Activated T-helper 2 cell treated with anti-CD3 and anti-CD28 coated beads, Interferon-gamma antibody, Interleukin-2, Interleukin-4, amounts not matched to agents 10 μg/mL and 5 μg/mL and 100 μg/mL, durations not matched to agents 14 hours and 24 hours and 36 hours (primary cell): ENCODE measurements at regions of chr11 and their contacts with region 1.

Region 1: DNA sequence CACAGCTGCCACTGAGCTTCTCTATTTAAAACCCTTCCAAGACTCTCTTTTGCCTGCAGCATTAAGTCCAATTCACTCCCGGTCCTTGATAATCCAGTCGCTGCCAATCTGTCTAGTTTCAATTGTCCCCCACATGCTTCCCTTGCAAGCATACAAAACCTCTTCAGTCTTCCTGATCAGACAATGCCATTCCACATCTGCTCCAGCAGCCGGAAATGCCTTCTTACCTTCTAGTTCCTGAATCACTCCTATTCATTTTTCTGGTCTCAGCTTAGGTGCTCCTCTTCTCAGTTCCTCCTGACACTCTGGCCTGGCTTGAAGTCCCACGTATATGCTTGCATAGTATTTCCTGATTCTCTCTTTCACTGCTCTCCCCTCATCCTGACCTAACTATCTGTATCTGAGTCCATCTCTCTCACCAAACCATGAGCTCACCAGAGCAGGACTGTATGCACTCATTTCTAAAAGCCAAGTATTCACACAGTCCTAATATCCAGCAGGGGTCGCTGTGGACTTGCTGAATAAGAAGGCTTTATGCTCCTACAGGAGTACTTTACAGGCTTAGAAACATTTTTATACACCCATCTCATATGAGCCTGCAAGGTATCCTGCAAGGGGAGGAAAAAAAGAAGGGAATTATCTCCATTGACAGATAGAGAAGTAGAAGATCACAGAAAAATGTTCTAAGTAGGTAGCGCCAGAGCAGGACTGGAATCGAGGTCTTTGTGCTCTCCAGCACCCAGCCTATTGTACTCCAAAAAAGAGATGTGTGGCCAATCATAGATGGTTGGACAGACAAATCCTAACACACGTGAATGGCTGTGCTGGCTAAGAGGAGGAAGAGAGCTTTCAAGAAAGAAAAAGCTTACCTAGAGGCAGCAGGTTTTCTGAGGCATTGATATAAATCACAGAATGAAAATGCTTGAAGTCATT is 19.2 kb downstream of the XRRA1 start:
- DNase-seq: peak; percentile 45
- H3K4me3 Mint-ChIP-seq: no peak overlapping the region
- H3K27ac Mint-ChIP-seq: no peak overlapping the region
- H3K4me1 Mint-ChIP-seq: peaks cover 39% of the 10 kb centered on the region
- H3K27me3 Mint-ChIP-seq: no peaks in the 10 kb centered on the region

Region 2: DNA sequence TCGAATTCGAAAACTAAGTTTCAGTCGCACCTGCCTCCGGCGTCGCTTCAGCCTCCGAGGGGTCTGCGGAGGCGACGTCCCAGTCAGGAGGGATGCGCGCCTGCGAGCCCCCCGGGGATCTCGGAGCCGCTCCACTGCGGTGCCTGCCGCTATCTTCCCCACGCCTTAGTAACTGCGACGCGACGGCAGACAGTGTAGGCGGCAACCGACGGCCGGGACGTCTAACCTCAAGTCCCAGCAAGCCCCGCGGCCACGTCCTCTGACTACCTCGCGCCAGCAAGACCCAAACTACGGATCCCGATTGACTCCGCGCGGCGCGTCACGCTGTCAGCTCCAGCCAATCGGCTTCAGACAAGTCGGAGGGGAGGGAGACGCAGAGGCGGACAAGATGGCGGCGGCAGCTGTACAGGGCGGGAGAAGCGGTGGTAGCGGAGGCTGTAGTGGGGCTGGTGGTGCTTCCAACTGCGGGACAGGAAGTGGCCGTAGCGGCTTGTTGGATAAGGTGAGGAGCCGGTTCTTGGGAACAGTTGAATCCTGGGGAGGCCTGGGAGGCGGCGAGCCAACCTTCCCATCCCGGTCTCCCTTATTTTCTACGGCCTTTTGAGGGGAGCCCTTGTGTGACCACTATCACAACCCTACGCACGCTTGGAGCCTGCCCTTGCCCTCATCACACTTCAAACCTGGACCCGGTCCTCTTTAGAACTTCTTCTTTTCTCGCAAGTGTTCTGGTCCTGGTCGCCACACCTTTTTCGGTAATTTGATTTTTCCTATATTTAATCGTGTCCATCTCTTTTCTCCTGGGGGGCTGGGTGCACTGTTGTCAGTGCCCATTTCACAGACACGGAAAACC is 19.4 kb after region 1 on chr11 and contains the starts of genes SPCS2 and XRRA1:
- intact Hi-C with region 1: loop called (anchors 2 kb)
- DNase-seq: peak; percentile 98
- H3K4me3 Mint-ChIP-seq: peak within 1 kb of the TSS; percentile 95
- H3K27ac Mint-ChIP-seq: peak within 1 kb of the TSS; percentile 94
- H3K4me1 Mint-ChIP-seq: peaks cover 38% of the 10 kb centered on the region
- H3K27me3 Mint-ChIP-seq: no peaks in the 10 kb centered on the region
- total RNA-seq, gene SPCS2: 169 and 173 TPM in 2 replicates
- total RNA-seq, gene XRRA1: 9.9 and 10.7 TPM in 2 replicates

Region 3: DNA sequence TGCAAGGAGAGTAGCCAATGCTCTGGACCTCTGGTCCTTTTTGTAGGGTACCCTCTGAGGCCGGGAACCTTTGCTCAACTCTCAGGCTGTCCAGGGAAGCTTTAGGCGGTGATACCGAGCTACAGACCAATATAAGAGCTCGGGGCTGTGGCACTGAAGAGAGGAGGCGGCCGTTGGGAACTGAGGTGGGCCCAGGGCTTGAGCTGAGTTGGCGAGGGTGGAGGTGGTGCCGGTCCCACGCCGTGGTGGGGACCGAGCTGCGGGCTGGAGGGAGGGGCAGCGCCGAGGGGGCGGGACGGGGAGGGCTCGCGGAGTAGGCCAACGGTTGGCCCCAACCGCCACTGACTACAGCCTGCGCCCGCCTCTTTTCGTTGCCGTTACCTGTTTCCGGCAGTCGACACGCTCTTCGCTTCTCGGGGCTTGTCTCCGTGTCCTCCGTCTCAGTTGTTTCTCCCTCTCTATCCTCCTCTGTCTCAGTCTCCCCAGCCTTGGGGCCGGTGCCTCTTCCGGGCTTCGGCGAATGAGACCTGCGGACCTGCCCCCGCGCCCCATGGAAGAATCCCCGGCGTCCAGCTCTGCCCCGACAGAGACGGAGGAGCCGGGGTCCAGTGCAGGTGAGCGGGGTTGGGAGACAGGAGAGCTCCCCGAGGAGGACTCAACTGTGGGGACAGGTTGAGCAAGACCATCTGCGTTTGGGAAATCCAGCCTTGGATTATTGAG is 59.0 kb after region 1 on chr11 and contains the start of gene NEU3:
- intact Hi-C with region 1: loop called (anchors 2 kb)
- DNase-seq: peak; percentile 79
- H3K4me3 Mint-ChIP-seq: peak within 1 kb of the TSS; percentile 94
- H3K27ac Mint-ChIP-seq: peak within 1 kb of the TSS; percentile 87
- H3K4me1 Mint-ChIP-seq: peaks cover 28% of the 10 kb centered on the region
- H3K27me3 Mint-ChIP-seq: no peaks in the 10 kb centered on the region
- total RNA-seq, gene NEU3: 16.5 and 16.6 TPM in 2 replicates

Region 4: DNA sequence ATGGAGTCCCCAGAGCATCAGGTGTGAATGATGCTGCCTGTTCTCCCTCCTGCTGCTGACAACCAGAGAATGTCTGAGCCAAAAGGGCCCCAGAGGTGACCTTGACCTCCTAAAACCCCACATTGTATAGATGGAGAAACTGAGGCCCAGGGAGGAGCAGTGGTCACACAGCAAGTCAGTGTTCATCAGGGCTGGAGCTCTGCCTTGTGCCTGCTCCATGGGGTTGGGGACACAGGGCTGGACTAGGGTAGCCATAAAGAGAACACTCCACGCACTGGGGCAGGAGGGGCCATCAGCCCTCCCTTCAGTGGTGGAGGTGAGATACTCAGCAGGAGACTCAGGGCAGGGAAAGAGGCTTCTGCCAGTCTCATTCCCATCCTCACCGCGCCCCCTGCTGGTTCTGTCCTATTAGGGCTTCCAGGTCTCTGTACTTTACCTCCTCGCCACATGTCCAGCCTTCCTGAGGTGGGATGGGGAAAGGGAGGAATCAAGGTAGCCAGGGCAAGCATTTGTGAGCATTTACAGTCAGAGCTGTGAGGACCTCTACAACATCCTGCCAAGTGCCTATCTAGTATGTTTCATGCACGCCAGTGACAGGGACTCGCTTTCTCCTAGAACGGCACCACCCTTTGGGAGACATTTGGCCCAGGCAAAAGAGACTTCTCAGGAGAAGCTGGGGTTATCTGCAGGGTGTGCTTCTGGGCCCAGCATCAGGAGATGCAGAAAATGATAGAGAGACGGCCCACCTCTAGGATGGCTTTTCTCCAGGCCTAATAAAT is 102.3 kb after region 1 on chr11:
- intact Hi-C with region 1: loop called (anchors 1 kb)
- DNase-seq: peak; percentile 36
- H3K4me3 Mint-ChIP-seq: no peak overlapping the region
- H3K27ac Mint-ChIP-seq: no peak overlapping the region
- H3K4me1 Mint-ChIP-seq: no peaks in the 10 kb centered on the region
- H3K27me3 Mint-ChIP-seq: no peaks in the 10 kb centered on the region

Region 5: GRCh38 chr11:75204685-75205563 is 275.2 kb after region 1 on chr11:
- intact Hi-C with region 1: loop called (anchors 1 kb)
- DNase-seq: peak; percentile 67
- H3K4me3 Mint-ChIP-seq: no peak overlapping the region
- H3K27ac Mint-ChIP-seq: no peak overlapping the region
- H3K4me1 Mint-ChIP-seq: no peaks in the 10 kb centered on the region
- H3K27me3 Mint-ChIP-seq: peaks cover 16% of the 10 kb centered on the region

Region 6: DNA sequence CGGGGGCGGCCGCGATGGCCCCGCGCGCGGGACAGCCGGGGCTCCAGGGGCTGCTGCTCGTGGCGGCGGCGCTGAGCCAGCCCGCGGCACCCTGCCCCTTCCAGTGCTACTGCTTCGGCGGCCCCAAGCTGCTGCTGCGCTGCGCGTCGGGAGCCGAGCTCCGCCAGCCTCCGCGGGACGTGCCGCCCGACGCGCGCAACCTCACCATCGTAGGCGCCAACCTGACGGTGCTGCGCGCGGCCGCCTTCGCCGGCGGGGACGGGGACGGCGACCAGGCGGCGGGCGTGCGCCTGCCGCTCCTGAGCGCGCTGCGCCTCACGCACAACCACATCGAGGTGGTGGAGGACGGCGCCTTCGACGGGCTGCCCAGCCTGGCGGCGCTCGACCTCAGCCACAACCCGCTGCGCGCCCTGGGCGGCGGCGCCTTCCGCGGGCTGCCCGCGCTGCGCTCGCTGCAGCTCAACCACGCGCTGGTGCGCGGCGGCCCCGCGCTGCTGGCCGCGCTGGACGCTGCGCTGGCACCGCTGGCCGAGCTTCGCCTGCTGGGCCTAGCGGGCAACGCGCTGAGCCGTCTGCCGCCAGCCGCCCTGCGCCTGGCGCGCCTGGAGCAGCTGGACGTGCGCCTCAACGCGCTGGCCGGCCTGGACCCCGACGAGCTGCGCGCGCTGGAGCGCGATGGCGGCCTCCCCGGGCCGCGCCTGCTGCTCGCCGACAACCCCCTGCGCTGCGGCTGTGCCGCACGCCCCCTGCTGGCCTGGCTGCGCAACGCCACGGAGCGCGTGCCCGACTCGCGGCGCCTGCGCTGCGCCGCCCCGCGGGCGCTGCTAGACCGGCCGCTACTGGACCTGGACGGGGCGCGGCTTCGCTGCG is 311.6 kb after region 1 on chr11:
- intact Hi-C with region 1: loop called (anchors 5 kb)
- DNase-seq: peak; percentile 86
- H3K4me3 Mint-ChIP-seq: peak overlapping the region; percentile 62
- H3K27ac Mint-ChIP-seq: no peak overlapping the region
- H3K4me1 Mint-ChIP-seq: peaks cover 4% of the 10 kb centered on the region
- H3K27me3 Mint-ChIP-seq: peaks cover 55% of the 10 kb centered on the region